Right cardiac atrium (tissue), 5 donors: ENCODE measurements at regions of chr10 and their contacts with region 1.

Region 1: GRCh38 chr10:61733358-61733940 is 70.7 kb downstream of the CABCOCO1 start:
- DNase-seq: no peak
- ATAC-seq: no peak
- H3K4me3 ChIP-seq: no peak overlapping the region
- H3K27ac ChIP-seq: no peak overlapping the region
- H3K4me1 ChIP-seq: no peaks in the 10 kb centered on the region
- H3K27me3 ChIP-seq: no peaks in the 10 kb centered on the region

Region 2: GRCh38 chr10:61135276-61135721 is 598.1 kb before region 1 on chr10:
- intact Hi-C with region 1: loop called in 1 of 4 experiments (anchors 10 kb)
- DNase-seq: no peak
- ATAC-seq: no peak
- H3K4me3 ChIP-seq: no peak overlapping the region
- H3K27ac ChIP-seq: no peak overlapping the region
- H3K4me1 ChIP-seq: no peaks in the 10 kb centered on the region
- H3K27me3 ChIP-seq: no peaks in the 10 kb centered on the region

Region 3: GRCh38 chr10:61223576-61223975 is 509.9 kb before region 1 on chr10:
- intact Hi-C with region 1: no loop called
- DNase-seq: no peak
- ATAC-seq: no peak
- H3K4me3 ChIP-seq: no peak overlapping the region
- H3K27ac ChIP-seq: no peak overlapping the region
- H3K4me1 ChIP-seq: no peaks in the 10 kb centered on the region
- H3K27me3 ChIP-seq: no peaks in the 10 kb centered on the region

Region 4: GRCh38 chr10:61804414-61804813 is 71.0 kb after region 1 on chr10:
- intact Hi-C with region 1: no loop called
- DNase-seq: no peak
- ATAC-seq: no peak
- H3K4me3 ChIP-seq: no peak overlapping the region
- H3K27ac ChIP-seq: no peak overlapping the region
- H3K4me1 ChIP-seq: no peaks in the 10 kb centered on the region
- H3K27me3 ChIP-seq: no peaks in the 10 kb centered on the region